Activated naive CD4-positive, alpha-beta T cell treated with anti-CD3 and anti-CD28 coated beads, Interleukin-2, amount 10 ng/mL, durations not matched to agents 7 days and 5 days (primary cell): ENCODE measurements at regions of chr16 and their contacts with region 1.

Region 1: DNA sequence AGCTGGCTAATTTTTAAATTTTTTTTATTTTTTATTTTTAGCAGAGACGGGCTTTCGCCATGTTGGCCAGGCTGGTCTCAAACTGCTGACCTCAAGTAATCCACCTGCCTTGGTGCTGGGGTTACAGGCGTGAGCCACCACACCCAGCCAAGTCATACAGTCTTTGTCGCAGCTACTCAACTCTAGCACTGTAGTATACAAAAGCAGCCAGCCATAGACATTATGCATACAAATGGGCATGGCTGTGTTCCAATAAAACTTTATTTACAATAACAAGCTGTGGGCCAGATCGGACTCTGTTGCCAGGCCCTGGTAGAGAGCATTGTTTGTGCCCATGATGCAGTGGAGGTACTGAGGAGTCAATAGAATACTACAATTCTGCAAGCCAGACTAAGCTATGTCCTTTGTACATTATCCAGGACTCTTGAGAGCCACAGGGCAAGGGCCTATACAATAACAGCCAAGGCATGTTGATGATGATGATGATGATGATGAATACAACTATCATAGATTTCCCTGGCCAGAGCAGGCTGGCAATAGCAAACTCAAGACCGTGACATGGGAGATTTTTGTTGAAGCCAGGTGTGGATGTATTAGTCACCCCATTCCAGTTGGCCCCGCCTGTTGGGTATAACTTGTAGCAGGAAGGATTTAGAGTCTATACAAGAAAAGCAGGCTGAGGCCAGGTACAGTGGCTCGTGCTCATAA is 101.8 kb downstream of the MYH11 start:
- DNase-seq: no peak
- H3K4me3 Mint-ChIP-seq: no peak overlapping the region
- H3K27ac Mint-ChIP-seq: no peak overlapping the region
- H3K4me1 Mint-ChIP-seq: no peaks in the 10 kb centered on the region
- H3K27me3 Mint-ChIP-seq: peaks cover 10% of the 10 kb centered on the region

Region 2: DNA sequence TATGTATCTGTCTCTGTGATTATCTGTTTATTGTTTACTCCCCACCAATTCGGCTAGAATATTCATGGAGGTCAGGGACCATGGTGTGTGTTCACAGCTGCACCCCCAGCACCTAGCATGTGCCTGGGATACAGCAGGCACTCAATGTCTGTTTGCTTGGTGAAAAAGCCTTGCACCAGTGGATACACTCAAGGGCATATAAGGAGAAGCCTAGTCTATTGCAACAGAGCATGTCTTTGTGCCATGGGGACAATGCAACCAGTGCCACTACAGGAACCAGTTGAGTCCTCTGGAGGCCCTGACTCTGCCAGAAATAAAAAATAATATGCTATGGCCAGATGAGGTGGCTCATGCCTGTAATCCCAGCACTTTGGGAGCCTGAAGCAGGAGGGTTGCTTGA is 11.3 kb before region 1 on chr16:
- CTCF ChIA-PET with region 1: interaction called, 17 read pairs
- DNase-seq: no peak
- H3K4me3 Mint-ChIP-seq: no peak overlapping the region
- H3K27ac Mint-ChIP-seq: no peak overlapping the region
- H3K4me1 Mint-ChIP-seq: no peaks in the 10 kb centered on the region
- H3K27me3 Mint-ChIP-seq: no peaks in the 10 kb centered on the region